ENCODE measurements at regions of chr5 and their contacts with region 1.

Region 1: GRCh38 chr5:102583276-102584124 is 84.7 kb upstream of the SLCO6A1 start:
- DNase-seq: no peak
- H3K4me3 Mint-ChIP-seq: no peak overlapping the region
- H3K27ac Mint-ChIP-seq: no peak overlapping the region
- H3K4me1 Mint-ChIP-seq: no peaks in the 10 kb centered on the region
- H3K27me3 Mint-ChIP-seq: no peaks in the 10 kb centered on the region
- CTCF ChIP-seq: peak; percentile 68

Region 2: DNA sequence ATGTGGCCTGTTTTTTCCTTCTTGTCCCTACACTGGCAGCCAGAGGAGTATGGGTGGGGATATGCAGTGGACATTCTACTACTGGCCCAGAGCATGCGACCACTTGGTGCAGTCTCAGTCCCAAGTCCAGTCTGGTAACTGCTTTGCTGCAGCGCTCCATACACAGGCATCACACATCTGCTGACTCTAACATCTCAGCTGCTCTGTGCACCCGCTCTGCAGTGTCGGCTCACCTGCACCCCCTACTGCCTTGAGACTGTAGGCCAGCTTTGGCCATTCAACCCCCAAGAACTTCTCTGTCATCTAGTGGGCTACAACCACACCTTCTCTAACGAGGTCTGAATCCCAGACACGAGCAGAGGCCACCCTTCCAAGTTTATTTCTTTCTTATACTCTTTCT is 38.3 kb before region 1 on chr5:
- CTCF ChIA-PET with region 1: no interaction called
- intact Hi-C with region 1: no loop called
- DNase-seq: peak; percentile 54
- H3K4me3 Mint-ChIP-seq: no peak overlapping the region
- H3K27ac Mint-ChIP-seq: no peak overlapping the region
- H3K4me1 Mint-ChIP-seq: no peaks in the 10 kb centered on the region
- H3K27me3 Mint-ChIP-seq: no peaks in the 10 kb centered on the region
- CTCF ChIP-seq: peak; percentile 53

Region 3: GRCh38 chr5:102628441-102629175 is 45.1 kb after region 1 on chr5:
- CTCF ChIA-PET with region 1: no interaction called
- intact Hi-C with region 1: no loop called
- DNase-seq: no peak
- H3K4me3 Mint-ChIP-seq: no peak overlapping the region
- H3K27ac Mint-ChIP-seq: no peak overlapping the region
- H3K4me1 Mint-ChIP-seq: no peaks in the 10 kb centered on the region
- H3K27me3 Mint-ChIP-seq: no peaks in the 10 kb centered on the region
- CTCF ChIP-seq: no peak

Region 4: DNA sequence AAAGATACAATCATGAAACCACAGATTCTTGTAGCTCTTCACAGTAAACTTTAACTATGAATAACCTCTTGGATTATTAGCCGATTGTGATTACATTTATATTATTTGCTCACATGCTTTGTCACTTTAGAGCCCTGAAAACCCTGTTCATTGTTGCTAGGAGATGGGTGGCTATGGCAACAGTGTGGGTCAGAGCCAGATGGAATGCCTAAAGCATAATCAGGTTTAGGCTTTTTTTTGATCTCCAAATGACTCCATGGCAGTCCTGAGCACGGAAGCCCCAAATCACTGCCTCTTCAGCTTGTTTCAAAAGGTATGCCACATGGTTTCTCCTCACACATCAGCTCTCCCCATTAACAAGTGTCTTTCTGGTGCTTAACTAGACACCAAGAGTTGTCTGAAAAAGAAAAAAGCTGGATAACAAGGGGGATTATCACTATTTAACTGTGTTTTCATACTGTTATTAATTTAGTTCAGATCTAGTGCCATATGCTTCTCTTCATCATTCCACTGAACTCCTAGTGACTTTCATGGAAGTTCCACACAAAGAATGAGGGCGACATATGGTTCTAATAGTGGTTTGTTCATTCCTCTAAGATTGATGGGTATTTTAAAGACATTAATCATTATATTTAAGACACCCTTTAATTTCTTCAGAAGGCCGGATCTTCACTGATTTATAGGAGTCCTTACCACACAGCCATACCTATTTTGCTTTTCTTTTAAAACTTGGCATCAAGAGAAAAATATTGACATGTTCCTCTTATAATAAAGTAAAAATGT is 82.9 kb after region 1 on chr5:
- CTCF ChIA-PET with region 1: no interaction called
- intact Hi-C with region 1: loop called (anchors 5 kb)
- DNase-seq: no peak
- H3K4me3 Mint-ChIP-seq: no peak overlapping the region
- H3K27ac Mint-ChIP-seq: no peak overlapping the region
- H3K4me1 Mint-ChIP-seq: peaks cover 7% of the 10 kb centered on the region
- H3K27me3 Mint-ChIP-seq: no peaks in the 10 kb centered on the region
- CTCF ChIP-seq: no peak

Region 5: DNA sequence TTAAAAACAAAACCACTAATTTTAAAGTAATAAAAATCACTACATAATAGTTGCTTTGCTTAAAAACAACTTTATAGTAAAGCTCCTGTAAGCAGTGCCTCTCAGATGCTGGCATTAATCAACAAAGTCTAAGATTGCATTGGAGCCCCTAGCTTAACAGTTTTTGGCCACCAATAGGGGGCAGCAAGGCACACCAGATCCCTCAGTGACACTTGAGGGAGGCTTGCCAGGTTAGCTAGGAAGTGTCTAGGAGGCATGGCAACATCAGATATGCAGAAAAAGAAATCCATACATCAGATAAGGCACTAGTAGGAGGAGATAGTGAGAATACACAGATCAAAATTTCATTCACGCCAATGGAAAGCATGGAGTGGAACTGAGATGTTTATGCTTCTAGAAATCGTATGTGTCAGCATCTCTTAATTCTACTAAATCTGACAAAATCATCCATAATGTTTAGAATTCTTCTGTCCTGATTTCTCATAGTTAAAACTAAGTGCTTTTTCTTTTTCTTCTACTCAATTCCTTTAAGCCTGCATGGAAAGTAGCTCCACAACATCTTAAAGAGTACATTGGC is 98.0 kb after region 1 on chr5:
- CTCF ChIA-PET with region 1: interaction called, 3 read pairs
- intact Hi-C with region 1: loop called (anchors 5 kb)
- DNase-seq: peak; percentile 87
- H3K4me3 Mint-ChIP-seq: no peak overlapping the region
- H3K27ac Mint-ChIP-seq: no peak overlapping the region
- H3K4me1 Mint-ChIP-seq: no peaks in the 10 kb centered on the region
- H3K27me3 Mint-ChIP-seq: peaks cover 12% of the 10 kb centered on the region
- CTCF ChIP-seq: peak; percentile 91

Region 6: DNA sequence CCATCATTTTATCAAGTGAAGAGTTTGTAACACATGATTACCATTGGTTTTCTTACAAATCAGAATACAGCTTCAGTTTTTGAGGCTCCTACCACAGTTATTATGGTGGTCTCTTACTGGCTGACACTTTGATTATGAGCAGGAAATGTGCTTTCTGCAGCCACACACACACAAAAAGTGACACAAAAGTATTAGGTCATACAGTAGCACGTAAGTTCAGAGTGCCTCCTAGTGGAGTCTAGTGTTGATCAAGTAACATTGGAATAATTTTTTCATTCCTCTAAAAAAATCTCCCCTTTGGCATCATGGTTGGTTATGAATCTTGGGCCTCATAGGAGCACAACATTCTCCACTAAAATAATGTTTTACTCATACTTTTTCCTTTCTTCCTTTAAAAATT is 209.2 kb after region 1 on chr5:
- CTCF ChIA-PET with region 1: no interaction called
- intact Hi-C with region 1: loop called (anchors 1 kb)
- DNase-seq: peak; percentile 15
- H3K4me3 Mint-ChIP-seq: no peak overlapping the region
- H3K27ac Mint-ChIP-seq: no peak overlapping the region
- H3K4me1 Mint-ChIP-seq: peaks cover 8% of the 10 kb centered on the region
- H3K27me3 Mint-ChIP-seq: no peaks in the 10 kb centered on the region
- CTCF ChIP-seq: peak; percentile 19

Region 7: GRCh38 chr5:103224118-103224893 is 640.8 kb after region 1 on chr5:
- CTCF ChIA-PET with region 1: no interaction called
- intact Hi-C with region 1: loop called (anchors 1 kb)
- DNase-seq: peak; percentile 69
- H3K4me3 Mint-ChIP-seq: peak overlapping the region; percentile 20
- H3K27ac Mint-ChIP-seq: no peak overlapping the region
- H3K4me1 Mint-ChIP-seq: no peaks in the 10 kb centered on the region
- H3K27me3 Mint-ChIP-seq: no peaks in the 10 kb centered on the region
- CTCF ChIP-seq: peak; percentile 47

Measured in Calu3 (cell line).